Activated CD4-positive, alpha-beta T cell treated with anti-CD3 and anti-CD28 coated beads, Interleukin-2, amount 10 ng/mL, durations not matched to agents 7 days and 5 days (primary cell): ENCODE measurements at regions of chr1 and their contacts with region 1.

Region 1: DNA sequence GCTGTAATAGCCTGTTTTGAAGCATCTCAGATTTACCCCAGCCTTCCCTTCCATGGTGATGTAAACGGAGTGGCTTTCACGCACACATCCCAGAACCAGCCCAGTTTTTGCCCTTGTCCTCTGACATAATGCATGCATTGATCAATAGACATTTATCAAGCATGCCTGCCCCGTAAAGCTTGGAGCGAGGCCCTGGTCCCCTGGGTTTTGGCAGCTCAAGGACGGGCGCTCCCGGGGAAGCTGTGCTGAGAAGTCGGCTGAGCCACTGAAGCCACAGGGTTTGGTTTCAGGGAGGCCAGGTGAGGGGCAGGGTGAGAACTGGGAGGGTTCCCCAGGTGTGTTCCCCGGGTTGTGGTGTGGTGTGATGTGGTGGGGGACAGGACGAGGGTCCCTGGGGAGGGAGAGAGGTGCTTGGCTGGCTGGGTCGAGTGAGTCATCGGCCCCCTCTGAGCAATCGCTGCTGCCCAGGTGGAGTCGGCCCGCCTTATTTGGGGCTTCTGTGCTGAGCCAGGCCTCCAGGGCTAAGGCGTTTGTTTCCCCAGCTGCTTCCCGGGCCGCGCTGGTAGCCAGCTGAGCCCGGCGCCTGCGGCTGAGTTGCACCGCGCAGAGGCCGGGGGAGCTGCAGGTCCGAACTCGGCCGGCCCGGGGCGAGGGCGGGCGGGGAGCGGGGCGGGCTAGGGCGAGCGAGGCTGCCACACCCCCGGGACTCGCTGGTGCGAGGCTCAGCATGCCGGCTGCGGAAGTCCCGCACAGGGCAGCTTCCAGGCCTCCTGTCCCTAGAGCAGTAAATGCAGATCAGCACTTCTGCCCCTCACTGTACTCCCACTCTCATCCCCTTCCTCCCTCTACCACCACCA is 23.6 kb downstream of the ATP2B4 start:
- DNase-seq: peak; percentile 56
- H3K4me3 Mint-ChIP-seq: peak overlapping the region; percentile 66
- H3K27ac Mint-ChIP-seq: peak overlapping the region; percentile 80
- H3K4me1 Mint-ChIP-seq: peaks cover 72% of the 10 kb centered on the region
- H3K27me3 Mint-ChIP-seq: no peaks in the 10 kb centered on the region

Region 2: DNA sequence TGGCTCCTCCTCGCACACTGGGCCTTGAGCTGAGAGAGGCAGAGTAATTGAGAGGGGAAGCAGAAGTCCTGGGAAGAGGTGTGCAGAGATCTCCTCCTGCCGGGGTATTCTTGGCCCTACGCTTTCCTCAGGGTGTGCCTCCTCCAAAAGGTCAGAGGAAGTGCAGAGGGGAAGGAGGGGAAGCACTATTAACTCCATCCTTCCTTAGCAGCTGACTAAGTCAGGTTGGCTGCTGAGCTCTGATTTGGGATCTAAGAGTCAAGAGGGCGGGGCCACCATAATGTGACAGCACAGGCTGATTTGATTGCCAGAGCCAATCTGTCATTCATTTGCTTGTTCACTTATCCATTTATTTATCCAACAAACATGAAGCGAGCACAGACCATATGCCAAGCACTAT is 11.3 kb before region 1 on chr1:
- CTCF ChIA-PET with region 1: interaction called, 14 read pairs
- POLR2A ChIA-PET with region 1: no interaction called
- DNase-seq: no peak
- H3K4me3 Mint-ChIP-seq: no peak overlapping the region
- H3K27ac Mint-ChIP-seq: peak overlapping the region; percentile 50
- H3K4me1 Mint-ChIP-seq: peaks cover 56% of the 10 kb centered on the region
- H3K27me3 Mint-ChIP-seq: no peaks in the 10 kb centered on the region

Region 3: GRCh38 chr1:203663294-203663693 is 13.1 kb after region 1 on chr1:
- CTCF ChIA-PET with region 1: interaction called, 12 read pairs
- POLR2A ChIA-PET with region 1: interaction called, 4 read pairs
- DNase-seq: no peak
- H3K4me3 Mint-ChIP-seq: no peak overlapping the region
- H3K27ac Mint-ChIP-seq: peak overlapping the region; percentile 60
- H3K4me1 Mint-ChIP-seq: peaks cover 59% of the 10 kb centered on the region
- H3K27me3 Mint-ChIP-seq: no peaks in the 10 kb centered on the region

Region 4: GRCh38 chr1:204036880-204037655 is 386.8 kb after region 1 on chr1:
- CTCF ChIA-PET with region 1: no interaction called
- POLR2A ChIA-PET with region 1: no interaction called
- DNase-seq: no peak
- H3K4me3 Mint-ChIP-seq: no peak overlapping the region
- H3K27ac Mint-ChIP-seq: no peak overlapping the region
- H3K4me1 Mint-ChIP-seq: no peaks in the 10 kb centered on the region
- H3K27me3 Mint-ChIP-seq: peaks cover 4% of the 10 kb centered on the region